BJ (cell line): ENCODE measurements at regions of chr10 and their contacts with region 1.

Region 1: DNA sequence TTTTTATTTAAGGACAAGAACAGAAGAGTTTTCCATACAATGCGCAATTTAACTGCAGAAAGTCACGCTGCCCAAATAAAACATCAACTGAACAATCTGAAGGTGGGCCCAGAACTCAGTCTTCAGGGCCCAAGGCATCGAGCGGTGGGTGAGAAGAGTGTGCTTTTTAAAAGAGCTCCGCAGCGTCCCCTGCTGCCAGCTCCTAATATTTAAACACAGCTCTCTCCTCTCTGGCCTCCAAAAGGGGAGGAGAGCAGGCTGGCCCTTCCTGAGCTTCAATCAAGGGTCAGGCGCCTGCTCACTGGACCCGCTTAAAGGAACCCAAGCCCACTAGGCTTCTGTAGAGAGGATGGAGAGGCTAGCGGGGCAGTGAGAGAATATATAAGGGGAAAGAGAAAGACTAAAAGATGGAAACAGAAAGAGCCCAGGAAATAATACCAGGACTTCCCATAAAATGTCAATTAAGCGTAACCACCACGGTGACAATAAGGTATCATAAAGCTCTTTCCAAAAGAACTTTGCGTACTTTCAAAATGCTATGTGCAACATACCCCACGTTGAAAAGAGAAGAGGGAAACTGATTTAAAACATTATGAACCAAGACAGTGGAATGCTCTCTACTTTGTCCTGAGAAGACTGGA is 2.8 kb downstream of the FAM53B start:
- DNase-seq: no peak
- H3K4me3 ChIP-seq: no peak overlapping the region
- H3K27me3 ChIP-seq: no peaks in the 10 kb centered on the region
- CTCF ChIP-seq: peak; percentile 87

Region 2: DNA sequence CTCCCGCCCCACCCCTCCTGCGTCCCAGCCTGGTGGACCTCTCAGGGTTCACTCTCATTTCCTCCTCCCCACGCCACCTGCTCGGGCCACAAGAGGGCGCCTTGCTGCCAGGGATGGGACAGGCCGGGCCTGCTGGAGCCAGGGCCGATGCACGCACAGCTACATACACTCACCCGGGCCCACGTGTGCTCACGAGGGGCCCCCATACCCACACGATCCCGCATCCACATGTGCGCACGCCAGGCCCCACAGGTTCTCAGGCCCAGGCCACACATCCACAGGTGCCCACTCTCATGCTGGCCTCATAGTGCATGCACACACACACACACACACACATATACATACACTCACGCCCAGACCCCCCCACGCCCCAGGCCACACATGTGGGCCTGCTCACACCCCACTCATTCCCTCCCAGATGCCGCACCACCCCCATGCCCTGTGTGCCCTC is 211.2 kb before region 1 on chr10:
- CTCF ChIA-PET with region 1: interaction called, 59 read pairs
- POLR2A ChIA-PET with region 1: no interaction called
- DNase-seq: peak; percentile 7
- H3K4me3 ChIP-seq: no peak overlapping the region
- H3K27me3 ChIP-seq: no peaks in the 10 kb centered on the region
- CTCF ChIP-seq: peak; percentile 98

Region 3: DNA sequence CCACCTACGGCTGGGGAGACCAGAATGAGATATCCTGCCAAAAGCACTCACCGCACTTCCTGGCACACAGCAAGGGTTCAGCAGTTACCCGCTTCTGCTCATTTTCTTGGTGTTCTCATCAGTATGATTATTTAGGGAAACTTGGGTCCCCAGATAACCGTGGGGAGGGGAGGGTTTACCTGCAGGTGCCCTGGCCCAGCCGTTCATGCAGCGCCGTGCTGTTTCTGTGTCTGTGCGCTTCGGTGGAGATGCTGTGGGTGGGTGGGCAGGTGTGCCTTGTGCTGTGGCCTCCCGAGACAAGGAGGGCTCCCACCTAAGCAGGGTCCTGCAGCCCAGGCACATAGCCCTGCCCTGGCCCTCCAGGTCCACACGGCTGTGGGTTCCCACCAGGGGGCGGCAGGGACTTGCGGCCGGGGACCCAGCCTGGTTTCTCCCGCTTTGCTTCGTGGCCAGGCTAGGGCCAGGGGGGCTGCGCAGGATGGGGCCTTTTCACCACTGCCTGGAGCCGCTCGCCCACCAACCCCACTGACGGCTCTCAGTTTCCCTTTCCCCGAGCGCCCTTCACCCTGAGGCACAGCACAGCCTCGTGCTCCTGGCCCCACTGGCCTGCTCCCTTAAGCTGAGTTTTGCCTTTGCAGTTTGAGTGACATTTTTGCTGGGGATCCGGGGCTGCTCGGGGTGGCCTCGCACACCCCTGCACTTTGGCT is 201.3 kb before region 1 on chr10:
- CTCF ChIA-PET with region 1: interaction called, 55 read pairs
- POLR2A ChIA-PET with region 1: interaction called, 4 read pairs
- DNase-seq: no peak
- H3K4me3 ChIP-seq: no peak overlapping the region
- H3K27me3 ChIP-seq: no peaks in the 10 kb centered on the region
- CTCF ChIP-seq: peak; percentile 82

Region 4: DNA sequence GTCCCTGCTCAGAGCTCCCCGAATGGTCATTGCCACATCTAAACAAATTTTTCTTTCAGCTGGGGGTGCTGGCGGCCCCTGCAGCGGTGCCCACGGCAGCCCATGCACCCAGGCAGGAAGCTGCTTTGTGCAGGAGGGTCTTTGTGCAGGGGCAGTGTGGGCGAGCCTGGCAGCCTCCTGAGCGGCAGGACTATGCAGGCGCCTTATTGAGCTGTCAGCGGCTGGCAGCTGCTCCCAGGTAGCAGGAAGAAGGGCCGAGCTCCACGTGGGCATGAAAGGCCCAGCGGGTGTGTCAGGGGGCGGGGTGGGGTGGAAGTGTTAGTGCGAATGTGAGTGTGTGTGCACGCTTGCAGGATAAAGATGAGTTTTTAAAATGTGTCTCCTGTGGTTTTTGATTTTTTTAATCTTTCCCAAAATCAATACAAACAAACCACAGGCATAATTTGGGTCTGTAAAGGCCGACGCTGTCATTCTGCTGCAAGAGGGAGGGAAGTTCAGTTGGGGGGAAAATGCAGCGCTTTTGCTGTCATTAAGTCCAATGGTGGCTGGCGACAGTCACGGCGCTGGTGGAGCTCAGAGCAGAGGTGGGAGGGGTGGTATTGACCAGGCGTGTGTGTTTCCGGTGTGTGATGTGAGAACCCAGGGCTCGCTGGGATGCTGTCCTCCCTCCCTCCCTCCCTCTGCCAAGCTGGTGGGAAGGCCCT is 195.9 kb before region 1 on chr10:
- CTCF ChIA-PET with region 1: interaction called, 53 read pairs
- POLR2A ChIA-PET with region 1: no interaction called
- DNase-seq: no peak
- H3K4me3 ChIP-seq: no peak overlapping the region
- H3K27me3 ChIP-seq: no peaks in the 10 kb centered on the region
- CTCF ChIP-seq: no peak

Region 5: GRCh38 chr10:124588736-124589490 is 152.5 kb before region 1 on chr10:
- CTCF ChIA-PET with region 1: no interaction called
- POLR2A ChIA-PET with region 1: no interaction called
- DNase-seq: no peak
- H3K4me3 ChIP-seq: no peak overlapping the region
- H3K27me3 ChIP-seq: peaks cover 2% of the 10 kb centered on the region; the same call in 1 of the 2 replicates
- CTCF ChIP-seq: no peak

Region 6: GRCh38 chr10:124688889-124689670 is 52.3 kb before region 1 on chr10:
- CTCF ChIA-PET with region 1: no interaction called
- POLR2A ChIA-PET with region 1: no interaction called
- DNase-seq: no peak
- H3K4me3 ChIP-seq: no peak overlapping the region
- H3K27me3 ChIP-seq: no peaks in the 10 kb centered on the region
- CTCF ChIP-seq: no peak

Region 7: DNA sequence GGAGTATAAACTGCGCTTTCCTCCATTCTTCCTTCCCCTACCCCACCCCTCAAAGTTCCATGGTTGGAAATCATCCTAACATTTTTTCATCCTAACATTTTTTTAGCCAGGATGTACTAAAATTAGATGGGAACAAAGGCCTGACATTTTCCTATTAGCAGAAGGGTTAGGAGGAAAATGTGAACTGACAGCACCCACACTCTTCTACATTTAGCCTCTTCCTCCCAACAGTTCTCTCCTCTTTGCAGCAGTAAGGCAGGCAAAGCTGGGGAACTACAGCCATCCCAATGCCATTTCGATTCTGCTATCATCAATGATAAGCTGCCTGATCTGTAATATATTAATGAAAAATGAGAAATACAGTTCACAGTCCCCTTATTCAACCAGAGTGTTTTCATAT is 14.2 kb after region 1 on chr10:
- CTCF ChIA-PET with region 1: interaction called, 11 read pairs
- POLR2A ChIA-PET with region 1: no interaction called
- DNase-seq: no peak
- H3K4me3 ChIP-seq: no peak overlapping the region
- H3K27me3 ChIP-seq: no peaks in the 10 kb centered on the region
- CTCF ChIP-seq: no peak